Lower leg skin (tissue), 4 donors: ENCODE measurements at regions of chr4 and their contacts with region 1.

Region 1: DNA sequence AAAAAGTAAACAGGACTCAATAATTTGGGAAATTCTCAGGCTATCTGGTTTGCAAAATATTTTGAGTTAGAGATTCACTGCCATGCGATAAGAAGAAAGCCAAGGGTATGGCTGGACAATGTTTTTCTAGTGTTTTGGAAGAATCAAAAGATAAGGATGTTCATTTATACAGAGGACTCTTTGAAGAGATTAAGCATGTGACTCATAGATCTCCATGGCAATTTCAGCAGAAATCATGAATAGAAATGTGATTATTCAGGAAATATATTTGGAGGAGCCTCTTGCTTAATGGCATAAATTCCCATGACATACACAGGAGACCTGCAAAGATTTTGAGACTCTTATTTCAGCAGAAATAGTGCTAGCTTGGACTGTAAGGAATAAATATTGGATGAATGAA is 16.7 kb upstream of the FRAS1 start:
- DNase-seq: no peak
- H3K4me3 ChIP-seq: no peak overlapping the region
- CTCF ChIP-seq: no peak
- POLR2A ChIP-seq: no peak

Region 2: GRCh38 chr4:78078091-78078490 is 37.7 kb after region 1 on chr4:
- intact Hi-C with region 1: loop called (anchors 1 kb)
- DNase-seq: no peak
- H3K4me3 ChIP-seq: no peak overlapping the region
- CTCF ChIP-seq: no peak
- POLR2A ChIP-seq: no peak

Region 3: DNA sequence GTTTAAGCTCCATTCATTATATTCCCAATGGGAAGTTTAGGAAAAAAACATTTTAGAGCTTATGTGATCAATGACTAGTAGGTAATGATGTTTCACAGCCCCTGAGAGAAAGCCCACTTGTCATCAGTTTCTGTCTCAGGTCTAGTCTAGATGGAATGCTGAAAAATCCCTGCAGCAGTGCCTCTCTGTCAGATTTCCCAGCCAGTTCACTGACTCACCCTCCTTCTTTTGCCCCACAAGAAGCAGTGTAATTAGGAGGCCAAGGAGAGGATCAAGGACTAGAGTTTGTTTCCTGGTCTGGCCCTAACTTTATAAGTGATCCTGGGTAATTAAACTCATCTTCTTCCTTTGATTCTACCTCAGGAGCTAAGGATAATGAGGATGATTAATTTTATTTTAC is 392.5 kb after region 1 on chr4:
- intact Hi-C with region 1: no loop called
- DNase-seq: no peak
- H3K4me3 ChIP-seq: no peak overlapping the region
- CTCF ChIP-seq: no peak
- POLR2A ChIP-seq: no peak

Region 4: DNA sequence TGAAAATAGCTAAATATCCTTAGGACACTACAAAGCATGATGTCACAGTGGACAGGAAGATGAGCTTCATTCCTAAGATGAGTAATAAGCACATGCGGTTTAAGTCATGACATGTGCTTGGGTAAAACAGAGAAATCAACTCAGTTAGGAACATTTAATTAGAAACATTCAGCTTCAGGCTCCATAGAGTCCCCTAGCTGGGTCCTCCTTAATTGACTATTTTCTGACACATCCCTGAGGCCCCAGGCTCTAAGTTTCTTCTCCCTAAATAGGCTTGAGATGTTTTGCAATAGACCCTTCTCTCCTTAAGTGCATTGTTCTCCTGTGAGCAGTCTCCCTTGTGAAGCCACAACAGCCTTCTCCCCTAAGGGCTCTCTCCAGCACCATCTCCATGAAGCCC is 440.7 kb after region 1 on chr4:
- intact Hi-C with region 1: no loop called
- DNase-seq: peak in 1 of 2 donors; percentile 47
- H3K4me3 ChIP-seq: no peak overlapping the region
- CTCF ChIP-seq: no peak
- POLR2A ChIP-seq: no peak